ENCODE measurements at regions of chr2 and their contacts with region 1.

Region 1: DNA sequence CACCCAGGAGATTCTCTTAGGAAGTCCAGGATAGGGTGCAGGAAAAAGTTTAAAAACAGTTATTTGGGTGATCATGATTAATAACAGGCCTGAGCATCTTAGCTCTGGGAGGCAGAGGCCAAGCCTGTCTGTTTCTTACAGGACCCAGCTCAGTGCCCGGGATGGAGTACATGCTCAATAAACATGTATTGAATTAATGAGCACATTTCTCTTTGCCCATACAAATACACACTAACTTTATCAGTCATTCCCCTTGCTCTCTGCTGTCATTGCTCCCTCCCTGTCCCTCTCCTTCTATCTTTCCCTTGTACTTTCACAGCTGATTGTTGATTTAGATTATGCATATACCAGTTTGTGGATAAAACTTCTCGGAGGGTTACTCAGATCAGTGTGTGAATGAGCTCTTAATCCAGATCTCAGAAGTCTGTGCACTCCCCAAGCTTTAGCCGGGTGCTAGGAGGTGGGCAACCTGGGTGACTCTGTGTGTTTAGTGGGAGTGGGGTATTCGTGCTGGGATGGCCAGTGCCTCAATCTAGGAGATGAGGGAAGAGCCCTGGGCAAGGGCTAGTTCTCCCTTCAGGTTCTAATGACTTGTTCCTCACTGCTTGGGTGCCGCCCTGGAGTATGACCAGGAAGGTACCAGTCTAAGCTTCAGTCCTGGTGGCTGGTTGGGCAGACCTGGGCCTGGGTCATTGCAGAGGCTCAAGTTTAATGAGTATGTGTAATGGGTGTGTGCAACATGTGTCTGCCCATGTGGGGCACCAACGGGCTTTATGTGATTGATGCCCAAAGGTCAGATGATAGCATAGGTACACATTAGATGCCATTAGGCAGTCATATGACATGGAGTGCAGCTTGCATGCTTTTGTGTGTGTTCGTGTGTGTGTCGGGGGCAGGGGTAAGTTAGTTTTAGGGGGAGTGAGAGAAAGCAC is 10.6 kb downstream of the EMX1 start:
- DNase-seq: no peak
- H3K4me3 ChIP-seq: no peak overlapping the region
- H3K27ac ChIP-seq: no peak overlapping the region
- H3K4me1 ChIP-seq: peaks cover 0 to 17% (median 14%) of the 10 kb centered on the region in 4 experiments
- H3K27me3 ChIP-seq: peaks cover 23 to 97% (median 55%) of the 10 kb centered on the region in 5 experiments

Region 2: DNA sequence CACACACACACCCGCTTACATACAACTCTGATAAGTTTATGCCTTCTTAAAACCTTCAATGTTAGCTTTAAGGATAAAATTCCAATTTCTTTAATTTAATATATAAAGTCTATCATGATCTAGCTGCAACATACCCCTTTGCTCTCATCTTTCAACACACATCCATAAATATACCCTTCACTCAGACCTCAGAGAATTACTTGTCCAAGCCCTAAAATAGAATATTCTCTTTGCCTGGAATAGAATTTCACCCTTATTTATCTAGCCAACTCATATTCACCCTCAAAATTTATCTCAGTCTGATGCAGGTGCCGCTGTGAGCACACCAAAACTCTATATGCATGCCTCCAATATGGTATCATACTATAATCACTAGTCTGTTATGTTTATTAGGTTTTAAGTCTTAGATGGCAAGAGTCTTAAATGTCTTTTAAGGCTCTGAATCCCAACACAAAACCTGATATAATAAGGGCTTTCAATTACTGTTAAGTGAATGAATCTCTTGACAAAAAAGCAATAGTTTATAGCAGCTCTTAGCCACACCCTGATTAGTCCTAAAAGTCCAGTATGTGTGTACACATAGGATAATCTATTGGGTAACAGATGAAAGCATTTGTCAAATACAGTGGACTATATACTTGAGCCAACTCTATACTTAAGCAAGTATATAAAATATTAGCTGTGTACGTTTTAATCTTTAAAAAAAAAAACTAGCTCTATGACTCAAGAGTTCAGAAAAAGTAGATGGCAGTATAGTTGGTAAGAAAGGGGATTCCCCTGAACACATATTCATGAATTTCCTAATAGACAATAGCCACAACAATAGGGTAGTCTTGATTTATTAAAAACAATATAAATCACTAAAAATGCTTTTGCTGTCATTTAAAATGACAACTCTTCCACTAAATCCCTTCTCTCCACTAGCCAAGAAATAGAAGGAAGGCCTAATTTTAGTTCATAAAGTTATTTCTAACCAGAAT is 246.6 kb before region 1 on chr2:
- CTCF ChIA-PET with region 1: no interaction called
- POLR2A ChIA-PET with region 1: no interaction called
- DNase-seq: no peak
- H3K4me3 ChIP-seq: no peak overlapping the region
- H3K27ac ChIP-seq: no peak overlapping the region
- H3K4me1 ChIP-seq: no peaks in the 10 kb centered on the region
- H3K27me3 ChIP-seq: no peaks in the 10 kb centered on the region

Region 3: DNA sequence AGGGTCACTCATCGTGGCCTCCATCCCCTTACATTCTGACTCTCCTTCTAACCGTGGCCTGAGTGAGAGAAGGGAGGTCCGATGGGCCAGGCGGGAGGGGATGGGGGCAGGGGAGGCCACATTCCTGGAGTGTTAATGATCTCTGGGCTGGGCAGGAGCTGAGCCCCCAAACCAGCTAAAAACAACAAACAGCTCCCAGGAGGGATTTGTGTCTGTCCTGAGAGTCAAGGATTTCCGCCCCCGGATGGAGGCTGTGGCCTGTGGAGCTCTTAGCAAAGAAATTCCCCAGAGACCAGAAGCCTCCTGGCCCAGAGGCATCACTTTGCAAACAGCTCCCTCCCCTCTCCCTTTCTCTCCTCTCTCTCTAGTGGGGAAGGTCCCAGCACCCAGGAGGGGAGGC is 12.9 kb after region 1 on chr2:
- CTCF ChIA-PET with region 1: interaction called, 10 read pairs
- POLR2A ChIA-PET with region 1: no interaction called
- DNase-seq: no peak
- H3K4me3 ChIP-seq: no peak overlapping the region
- H3K27ac ChIP-seq: no peak overlapping the region
- H3K4me1 ChIP-seq: no peaks in the 10 kb centered on the region
- H3K27me3 ChIP-seq: peaks cover 0 to 2% (median 0%) of the 10 kb centered on the region in 5 experiments

Measured in common myeloid progenitor, CD34-positive (primary cell).